Endothelial cell of umbilical vein (primary cell): ENCODE measurements at regions of chr1 and their contacts with region 1.

Region 1: DNA sequence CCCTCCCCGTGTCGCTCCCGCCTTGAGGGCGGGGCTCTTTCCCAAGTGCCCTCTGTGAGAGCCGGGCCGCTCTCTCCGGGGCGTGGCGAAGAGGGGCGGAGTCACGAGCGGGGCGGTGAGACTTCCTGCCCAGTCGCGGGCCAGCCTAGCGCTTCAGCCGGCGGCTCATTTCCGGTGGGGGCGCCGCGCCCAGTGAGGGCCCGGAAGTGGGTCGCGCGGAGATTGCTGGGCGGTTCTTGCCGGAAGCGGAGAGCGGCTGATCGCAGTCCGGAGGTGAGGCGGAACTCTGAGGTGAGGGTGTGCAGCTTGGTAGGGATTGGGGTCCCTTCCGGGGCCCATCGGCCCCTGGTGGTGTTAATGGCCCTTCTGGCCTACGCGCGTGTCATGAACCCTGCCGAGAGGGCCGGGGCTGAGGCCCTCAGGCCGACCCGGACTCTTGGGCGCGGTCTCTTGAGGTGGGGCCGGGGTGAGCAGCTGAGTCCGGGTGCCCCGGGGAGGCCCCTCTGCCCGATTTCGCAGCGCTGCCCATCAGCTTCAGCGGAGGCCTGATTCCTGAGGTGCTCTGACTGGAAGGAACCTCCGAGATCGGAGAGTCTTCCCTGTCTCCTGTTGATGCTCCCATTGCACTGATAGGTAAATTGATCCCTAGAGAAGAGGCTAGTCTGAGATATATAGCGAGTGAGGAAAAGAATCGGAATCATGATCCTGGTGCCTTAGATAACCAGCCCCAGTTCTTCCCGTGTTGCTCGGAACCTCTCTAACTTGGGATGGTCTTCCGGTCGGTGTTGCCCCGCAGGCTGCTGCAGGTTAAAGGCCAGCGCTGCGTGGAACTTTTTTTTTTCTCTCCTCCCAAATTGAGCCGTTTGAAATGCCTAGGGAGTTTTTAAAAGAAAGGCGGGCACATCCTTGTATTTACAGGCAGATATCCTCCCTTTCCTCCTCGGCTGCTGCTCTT is at the start of gene CAP1:
- DNase-seq: peak; percentile 97
- H3K4me3 ChIP-seq: peak within 1 kb of the TSS; percentile 76 to 92 (median 90)
- H3K27ac ChIP-seq: peak within 1 kb of the TSS; percentile 83
- H3K4me1 ChIP-seq: peaks cover 39% of the 10 kb centered on the region
- H3K27me3 ChIP-seq: no peaks in the 10 kb centered on the region
- CTCF ChIP-seq: no peak
- POLR2A ChIP-seq: peak; percentile 83
- total RNA-seq, gene CAP1: 415 and 427 TPM in 2 replicates

Region 2: DNA sequence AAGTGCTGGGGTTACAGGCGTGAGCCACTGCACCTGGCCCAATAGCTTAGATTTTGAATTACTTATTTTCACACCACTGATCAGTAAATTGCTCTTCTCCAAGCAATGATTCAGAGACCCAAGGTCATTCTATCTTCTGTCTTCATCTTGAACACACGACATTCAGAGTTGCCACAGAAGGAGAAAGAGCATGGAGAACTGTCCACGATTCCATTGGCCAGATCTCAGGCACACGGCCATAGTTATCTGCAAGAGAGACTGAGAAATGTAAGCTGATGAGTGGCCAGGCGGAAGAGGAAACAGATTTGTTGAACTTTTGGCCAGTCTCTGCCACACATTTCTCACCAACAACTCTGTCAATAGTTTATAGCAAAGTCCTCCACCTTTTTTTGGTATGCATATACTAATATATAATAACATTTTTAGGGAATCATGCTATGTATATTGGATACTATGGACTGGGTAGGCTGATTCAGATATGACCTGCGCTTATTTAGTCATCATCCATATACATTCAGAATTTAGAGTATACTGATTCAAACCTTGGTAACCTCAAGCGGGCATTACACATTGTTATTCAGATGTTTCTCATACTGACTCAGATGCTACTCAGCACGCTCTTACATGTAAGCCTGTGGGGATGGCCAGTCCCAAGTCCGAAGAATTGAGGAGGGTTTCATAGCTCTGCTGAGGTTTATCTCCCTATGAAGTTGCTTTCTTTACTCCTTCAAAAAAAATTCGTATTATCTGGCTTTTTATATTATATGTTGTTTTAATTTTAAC is 25.8 kb before region 1 on chr1:
- CTCF ChIA-PET with region 1: interaction called, 4 read pairs
- POLR2A ChIA-PET with region 1: interaction called, 4 read pairs
- dilution Hi-C with region 1: no loop called
- intact Hi-C with region 1: loop called (anchors 1 kb)
- DNase-seq: peak; percentile 81
- H3K4me3 ChIP-seq: no peak overlapping the region
- H3K27ac ChIP-seq: peak overlapping the region; percentile 92
- H3K4me1 ChIP-seq: peaks cover 22% of the 10 kb centered on the region
- H3K27me3 ChIP-seq: no peaks in the 10 kb centered on the region
- CTCF ChIP-seq: no peak
- POLR2A ChIP-seq: no peak

Region 3: GRCh38 chr1:40059338-40059959 is 18.7 kb after region 1 on chr1:
- CTCF ChIA-PET with region 1: interaction called, 9 read pairs
- POLR2A ChIA-PET with region 1: no interaction called
- dilution Hi-C with region 1: no loop called
- intact Hi-C with region 1: loop called (anchors 1 kb)
- DNase-seq: peak; percentile 80
- H3K4me3 ChIP-seq: peak overlapping the region in 1 of 3 experiments; percentile 26
- H3K27ac ChIP-seq: peak overlapping the region; percentile 64
- H3K4me1 ChIP-seq: peaks cover 48% of the 10 kb centered on the region
- H3K27me3 ChIP-seq: no peaks in the 10 kb centered on the region
- CTCF ChIP-seq: peak in 1 of 2 donors; percentile 8
- POLR2A ChIP-seq: peak; percentile 31

Region 4: DNA sequence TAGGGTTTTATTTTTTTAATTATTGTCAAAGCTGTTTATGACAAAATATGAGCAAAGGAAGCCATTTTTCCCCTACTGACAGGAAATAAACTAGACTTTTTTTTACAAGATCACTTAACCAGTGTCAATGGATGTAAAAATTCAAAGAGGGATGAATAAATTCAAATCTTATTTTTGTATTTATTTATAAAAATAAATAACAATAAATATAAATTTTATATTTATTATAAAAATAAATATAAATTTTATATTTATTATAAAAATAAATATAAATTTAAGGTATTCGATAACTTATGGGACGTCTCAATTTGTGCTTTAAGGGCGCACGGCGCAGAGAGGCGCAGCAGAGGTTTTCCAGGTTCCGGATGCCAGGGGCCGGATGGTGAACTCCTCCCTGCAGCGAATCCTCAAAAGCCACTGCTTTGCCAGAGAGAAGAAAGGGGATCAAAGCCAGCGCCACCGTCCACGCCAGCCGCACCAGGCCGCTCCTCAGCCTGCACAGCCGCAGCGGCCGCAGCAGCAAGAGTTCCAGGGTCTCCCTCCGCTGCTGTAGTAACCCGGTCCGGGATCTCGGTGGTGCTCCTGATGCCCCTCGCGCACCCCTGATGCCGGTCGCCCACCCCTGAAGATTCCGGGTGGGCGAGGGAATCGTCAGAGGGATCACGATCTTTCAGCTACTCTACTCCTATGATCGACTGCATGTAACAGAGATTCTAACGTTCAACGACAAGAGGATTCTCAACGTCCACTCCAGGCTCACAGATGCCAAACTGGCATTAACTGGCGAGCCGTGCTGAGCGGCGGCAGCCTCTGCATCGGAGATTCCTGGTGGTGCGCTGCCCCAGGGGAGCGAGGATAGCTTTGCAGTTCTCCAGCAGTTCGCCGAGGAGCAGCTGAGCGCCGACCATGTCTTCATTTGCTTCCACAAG is 91.9 kb after region 1 on chr1:
- CTCF ChIA-PET with region 1: no interaction called
- POLR2A ChIA-PET with region 1: no interaction called
- dilution Hi-C with region 1: no loop called
- intact Hi-C with region 1: no loop called
- DNase-seq: peak; percentile 33
- H3K4me3 ChIP-seq: peak overlapping the region in 2 of 3 experiments; percentile 32 to 35
- H3K27ac ChIP-seq: no peak overlapping the region
- H3K4me1 ChIP-seq: peaks cover 13% of the 10 kb centered on the region
- H3K27me3 ChIP-seq: peaks cover 13 to 25% of the 10 kb centered on the region in 2 experiments
- CTCF ChIP-seq: no peak
- POLR2A ChIP-seq: no peak

Region 5: DNA sequence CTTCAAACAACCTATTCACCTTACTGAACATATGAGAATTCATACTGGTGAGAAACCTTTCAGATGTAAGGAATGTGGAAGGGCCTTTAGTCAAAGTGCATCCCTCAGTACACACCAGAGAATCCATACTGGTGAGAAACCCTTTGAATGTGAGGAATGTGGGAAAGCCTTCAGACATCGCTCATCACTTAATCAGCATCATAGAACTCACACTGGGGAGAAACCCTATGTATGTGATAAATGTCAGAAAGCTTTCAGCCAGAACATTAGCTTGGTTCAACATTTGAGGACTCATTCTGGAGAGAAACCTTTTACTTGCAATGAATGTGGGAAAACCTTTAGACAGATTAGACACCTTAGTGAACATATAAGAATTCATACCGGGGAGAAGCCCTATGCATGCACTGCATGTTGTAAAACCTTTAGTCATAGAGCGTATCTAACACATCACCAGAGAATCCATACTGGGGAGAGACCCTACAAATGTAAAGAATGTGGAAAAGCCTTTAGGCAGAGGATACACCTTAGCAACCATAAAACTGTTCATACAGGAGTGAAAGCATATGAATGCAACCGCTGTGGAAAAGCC is 454.6 kb after region 1 on chr1:
- CTCF ChIA-PET with region 1: no interaction called
- POLR2A ChIA-PET with region 1: no interaction called
- dilution Hi-C with region 1: no loop called
- intact Hi-C with region 1: no loop called
- DNase-seq: no peak
- H3K4me3 ChIP-seq: no peak overlapping the region
- H3K27ac ChIP-seq: no peak overlapping the region
- H3K4me1 ChIP-seq: no peaks in the 10 kb centered on the region
- H3K27me3 ChIP-seq: no peaks in the 10 kb centered on the region
- CTCF ChIP-seq: no peak
- POLR2A ChIP-seq: no peak